MCF 10A (cell line): ENCODE measurements at regions of chr11 and their contacts with region 1.

Region 1: GRCh38 chr11:11864803-11865202 is 23.0 kb downstream of the USP47 start:
- DNase-seq: no peak
- H3K4me3 Mint-ChIP-seq: no peak overlapping the region
- H3K27ac Mint-ChIP-seq: no peak overlapping the region
- H3K4me1 Mint-ChIP-seq: peaks cover 27% of the 10 kb centered on the region
- H3K27me3 Mint-ChIP-seq: no peaks in the 10 kb centered on the region
- CTCF ChIP-seq: no peak

Region 2: GRCh38 chr11:11770296-11770695 is 94.5 kb before region 1 on chr11:
- CTCF ChIA-PET with region 1: no interaction called
- POLR2A ChIA-PET with region 1: no interaction called
- intact Hi-C with region 1: no loop called
- DNase-seq: no peak
- H3K4me3 Mint-ChIP-seq: no peak overlapping the region
- H3K27ac Mint-ChIP-seq: no peak overlapping the region
- H3K4me1 Mint-ChIP-seq: peaks cover 10% of the 10 kb centered on the region
- H3K27me3 Mint-ChIP-seq: no peaks in the 10 kb centered on the region
- CTCF ChIP-seq: no peak

Region 3: DNA sequence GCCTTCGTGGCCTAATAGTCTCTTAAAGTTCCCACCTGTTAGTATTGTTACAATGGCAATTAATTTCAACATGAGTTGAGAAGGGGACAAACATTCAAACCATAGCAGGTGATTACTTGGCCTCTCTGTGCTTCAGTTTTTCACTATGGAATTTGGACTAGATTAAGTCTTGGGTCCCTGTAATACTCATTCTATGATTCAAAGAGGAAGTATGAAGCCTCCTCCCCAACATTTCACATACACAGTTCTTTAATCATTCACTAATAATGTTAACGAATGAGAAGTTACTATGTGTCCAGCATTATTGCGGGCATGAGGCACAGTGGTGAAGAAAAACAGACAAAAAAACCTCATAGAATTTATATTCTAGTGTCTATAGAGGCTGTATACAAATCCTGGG is 42.9 kb before region 1 on chr11:
- CTCF ChIA-PET with region 1: no interaction called
- POLR2A ChIA-PET with region 1: no interaction called
- intact Hi-C with region 1: loop called (anchors 1 kb)
- DNase-seq: no peak
- H3K4me3 Mint-ChIP-seq: no peak overlapping the region
- H3K27ac Mint-ChIP-seq: no peak overlapping the region
- H3K4me1 Mint-ChIP-seq: no peaks in the 10 kb centered on the region
- H3K27me3 Mint-ChIP-seq: no peaks in the 10 kb centered on the region
- CTCF ChIP-seq: no peak

Region 4: GRCh38 chr11:11966826-11967668 is 102.2 kb after region 1 on chr11:
- CTCF ChIA-PET with region 1: no interaction called
- POLR2A ChIA-PET with region 1: no interaction called
- intact Hi-C with region 1: no loop called
- DNase-seq: peak; percentile 75
- H3K4me3 Mint-ChIP-seq: no peak overlapping the region
- H3K27ac Mint-ChIP-seq: no peak overlapping the region
- H3K4me1 Mint-ChIP-seq: peaks cover 5% of the 10 kb centered on the region
- H3K27me3 Mint-ChIP-seq: no peaks in the 10 kb centered on the region
- CTCF ChIP-seq: peak; percentile 79

Region 5: DNA sequence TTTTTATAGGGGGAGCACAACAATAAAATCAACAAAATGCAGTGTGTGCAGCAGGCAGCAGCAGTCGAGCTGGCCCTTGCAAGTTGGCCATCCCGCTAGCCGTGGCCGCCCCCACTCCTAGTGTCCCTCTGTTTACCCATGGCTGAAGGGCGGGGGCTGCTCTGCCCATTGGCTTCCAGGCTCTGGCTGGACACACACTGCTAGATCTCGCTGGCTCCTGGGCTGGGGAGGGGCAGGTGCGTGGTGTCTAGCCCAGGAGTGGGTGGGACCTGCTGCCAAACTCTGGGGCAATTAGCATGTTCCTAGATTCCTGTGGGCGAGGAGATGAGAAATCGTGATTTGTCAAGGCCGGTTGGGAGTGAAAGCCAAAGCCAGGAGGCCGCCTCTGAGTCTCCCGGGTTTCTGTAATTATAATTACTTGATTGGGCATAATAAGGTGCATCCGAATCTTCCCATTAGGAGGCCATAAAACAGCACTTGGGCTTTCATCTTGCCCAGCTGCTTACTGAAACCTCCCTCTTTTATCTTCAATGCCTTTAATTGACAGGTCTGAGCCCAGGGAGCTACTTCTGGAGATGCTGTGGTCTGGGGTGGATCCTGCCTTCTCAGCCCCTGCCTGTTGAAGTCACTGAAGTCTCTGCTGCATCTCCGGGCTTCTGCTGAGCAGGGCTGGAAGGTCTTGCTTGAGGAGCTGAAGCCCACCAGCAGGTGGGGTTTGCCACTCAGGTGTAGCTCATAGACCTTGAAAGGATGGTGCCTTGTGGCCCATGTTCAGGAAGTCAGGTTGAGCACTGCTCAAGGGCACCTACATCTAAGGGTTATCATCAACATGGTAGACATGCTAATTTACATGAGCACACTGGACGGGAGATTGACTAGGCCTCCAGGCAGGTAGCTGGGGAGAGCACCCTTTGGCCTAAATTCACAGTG is 188.1 kb after region 1 on chr11:
- CTCF ChIA-PET with region 1: no interaction called
- POLR2A ChIA-PET with region 1: no interaction called
- intact Hi-C with region 1: no loop called
- DNase-seq: peak; percentile 60
- H3K4me3 Mint-ChIP-seq: no peak overlapping the region
- H3K27ac Mint-ChIP-seq: peak overlapping the region; percentile 10
- H3K4me1 Mint-ChIP-seq: peaks cover 30% of the 10 kb centered on the region
- H3K27me3 Mint-ChIP-seq: no peaks in the 10 kb centered on the region
- CTCF ChIP-seq: no peak